Heart left ventricle (tissue), 16 donors: ENCODE measurements at regions of chr11 and their contacts with region 1.

Region 1: GRCh38 chr11:75150879-75151278 is at the start of gene SLCO2B1:
- DNase-seq: peak in 2 of 5 donors; percentile 58 to 70
- ATAC-seq: peak; percentile 21 to 77 (median 54)
- H3K4me3 ChIP-seq: peak within 1 kb of the TSS in 11 of 12 donors; percentile 1 to 66 (median 53)
- H3K27ac ChIP-seq: peak within 1 kb of the TSS in 11 of 12 donors; percentile 23 to 85 (median 51)
- H3K4me1 ChIP-seq: peaks cover 0 to 72% (median 24%) of the 10 kb centered on the region in 12 donors
- H3K27me3 ChIP-seq: no peaks in the 10 kb centered on the region
- CTCF ChIP-seq: no peak
- POLR2A ChIP-seq: peak in 1 of 2 donors; percentile 21
- total RNA-seq, gene SLCO2B1: 8.1 to 167 (median 18.6) TPM

Region 2: GRCh38 chr11:75191330-75191717 is 40.4 kb after region 1 on chr11:
- intact Hi-C with region 1: loop called in 1 of 10 experiments (anchors 5 kb)
- DNase-seq: no peak
- ATAC-seq: peak in 1 of 4 donors; percentile 17
- H3K4me3 ChIP-seq: no peak overlapping the region
- H3K27ac ChIP-seq: peak overlapping the region in 2 of 12 donors; percentile 26 to 87
- H3K4me1 ChIP-seq: peaks cover 3 to 87% (median 34%) of the 10 kb centered on the region in 12 donors
- H3K27me3 ChIP-seq: no peaks in the 10 kb centered on the region
- CTCF ChIP-seq: no peak
- POLR2A ChIP-seq: no peak